ENCODE measurements at regions of chr17 and their contacts with region 1.

Region 1: DNA sequence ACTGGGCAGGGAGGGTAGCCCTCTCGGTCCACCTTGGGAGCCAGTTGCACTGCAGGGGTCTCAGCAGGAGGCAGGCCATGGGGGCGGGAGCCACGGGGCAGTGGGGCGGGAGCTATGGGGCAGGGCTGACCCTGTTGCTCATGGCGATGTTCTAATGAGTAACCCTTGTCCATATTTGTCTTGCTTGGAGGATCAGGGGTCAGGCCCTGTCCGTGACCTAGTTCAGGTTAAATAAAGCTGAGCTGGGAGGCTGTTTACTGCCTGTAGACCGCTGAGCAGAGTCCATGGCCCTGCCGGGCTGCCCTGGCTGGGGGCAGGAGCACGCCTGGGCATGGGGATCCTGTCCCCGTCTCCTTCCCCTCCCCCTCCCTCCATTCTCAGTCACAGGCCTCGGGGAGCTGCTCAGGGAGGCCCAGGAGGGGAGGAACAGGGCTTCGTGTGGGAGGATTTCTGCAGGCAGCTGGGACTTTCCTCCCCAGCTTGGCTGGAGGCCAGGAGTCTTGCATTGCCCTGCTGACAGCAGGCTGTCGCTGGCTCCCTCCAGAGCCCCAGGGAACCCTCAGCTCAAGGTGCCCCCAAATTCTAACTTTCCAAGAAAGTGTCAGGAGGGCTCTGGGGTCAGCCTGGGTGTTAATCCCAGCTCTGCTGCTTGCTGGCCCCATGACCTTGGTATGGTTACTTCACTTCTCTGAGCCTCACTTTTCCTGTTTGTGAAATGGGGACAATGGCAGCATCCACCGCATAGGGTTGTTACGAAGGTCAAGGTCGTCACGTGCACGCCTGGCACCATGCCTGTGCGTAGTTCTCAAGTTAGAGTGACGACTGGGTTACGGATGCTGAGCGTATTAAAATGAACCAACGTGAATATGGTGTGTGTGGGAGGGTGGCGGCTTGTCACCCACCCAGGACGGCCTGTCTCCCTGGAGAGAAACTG is 6.1 kb upstream of the SERPINF2 start:
- DNase-seq: peak; percentile 40
- H3K27ac ChIP-seq: peak overlapping the region; percentile 99
- CTCF ChIP-seq: no peak

Region 2: DNA sequence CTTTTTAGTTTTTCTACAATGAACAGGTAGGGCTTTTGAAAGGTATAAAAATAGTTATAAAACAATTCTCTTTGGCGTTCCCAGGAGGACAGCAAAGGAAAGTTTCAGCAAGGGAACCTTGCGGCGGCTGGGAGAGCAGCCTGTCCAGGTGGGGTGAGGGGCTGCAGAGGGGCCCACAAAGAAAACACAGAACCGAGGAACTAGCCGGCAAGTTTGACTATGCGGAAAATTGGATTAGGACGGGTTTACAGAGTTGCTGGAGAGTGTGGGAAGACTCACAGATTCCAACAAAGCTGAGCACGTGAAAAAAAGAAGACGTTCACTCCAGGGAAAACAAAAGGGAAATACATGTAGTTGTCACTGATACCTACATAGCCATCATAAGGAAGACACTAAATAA is 815.3 kb after region 1 on chr17:
- CTCF ChIA-PET with region 1: no interaction called
- POLR2A ChIA-PET with region 1: interaction called, 10 read pairs
- DNase-seq: no peak
- H3K27ac ChIP-seq: no peak overlapping the region
- CTCF ChIP-seq: no peak

Measured in RWPE1 (cell line).